ENCODE measurements at regions of chr3 and their contacts with region 1.

Region 1: GRCh38 chr3:43190666-43191065 is 84.8 kb upstream of the POMGNT2 start:
- DNase-seq: no peak
- H3K4me3 ChIP-seq: no peak overlapping the region
- H3K4me3 Mint-ChIP-seq: no peak overlapping the region
- H3K27ac ChIP-seq: no peak overlapping the region
- H3K27ac Mint-ChIP-seq: no peak overlapping the region
- H3K4me1 ChIP-seq: peaks cover 46% of the 10 kb centered on the region
- H3K4me1 Mint-ChIP-seq: peaks cover 34 to 44% (median 40%) of the 10 kb centered on the region in 4 donors
- H3K27me3 ChIP-seq: no peaks in the 10 kb centered on the region
- H3K27me3 Mint-ChIP-seq: no peaks in the 10 kb centered on the region

Region 2: DNA sequence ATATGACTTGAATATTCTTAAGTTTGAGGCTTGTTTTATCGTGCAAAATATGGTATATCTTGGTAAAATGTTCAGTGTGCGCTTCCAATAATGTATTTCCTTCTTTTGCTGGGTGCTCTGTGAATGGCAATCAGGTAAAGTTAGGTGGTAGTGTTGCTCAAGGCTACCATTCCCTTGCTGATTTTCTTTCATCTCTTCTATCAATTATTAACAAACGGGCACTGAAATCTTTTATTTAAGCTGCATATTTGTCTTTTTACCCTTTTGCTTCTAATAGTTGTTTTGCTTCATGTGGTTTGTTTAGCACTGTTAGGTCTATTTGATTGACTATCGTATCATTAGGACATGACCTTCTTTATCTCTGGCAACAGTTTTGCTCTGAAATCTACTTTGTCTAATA is 1749.1 kb before region 1 on chr3:
- CTCF ChIA-PET with region 1: no interaction called
- POLR2A ChIA-PET with region 1: no interaction called
- intact Hi-C with region 1: no loop called
- DNase-seq: no peak
- H3K4me3 ChIP-seq: no peak overlapping the region
- H3K4me3 Mint-ChIP-seq: no peak overlapping the region
- H3K27ac ChIP-seq: no peak overlapping the region
- H3K27ac Mint-ChIP-seq: no peak overlapping the region
- H3K4me1 ChIP-seq: no peaks in the 10 kb centered on the region
- H3K4me1 Mint-ChIP-seq: no peaks in the 10 kb centered on the region
- H3K27me3 ChIP-seq: no peaks in the 10 kb centered on the region
- H3K27me3 Mint-ChIP-seq: no peaks in the 10 kb centered on the region

Region 3: GRCh38 chr3:43001094-43001553 is 189.5 kb before region 1 on chr3:
- CTCF ChIA-PET with region 1: no interaction called
- POLR2A ChIA-PET with region 1: no interaction called
- intact Hi-C with region 1: no loop called
- DNase-seq: no peak
- H3K4me3 ChIP-seq: no peak overlapping the region
- H3K4me3 Mint-ChIP-seq: no peak overlapping the region
- H3K27ac ChIP-seq: no peak overlapping the region
- H3K27ac Mint-ChIP-seq: no peak overlapping the region
- H3K4me1 ChIP-seq: no peaks in the 10 kb centered on the region
- H3K4me1 Mint-ChIP-seq: peaks cover 0 to 9% (median 3%) of the 10 kb centered on the region in 4 donors
- H3K27me3 ChIP-seq: no peaks in the 10 kb centered on the region
- H3K27me3 Mint-ChIP-seq: peaks cover 0 to 2% of the 10 kb centered on the region in 2 donors

Region 4: GRCh38 chr3:43105596-43106292 is 84.9 kb before region 1 on chr3 and contains the start of gene POMGNT2:
- CTCF ChIA-PET with region 1: no interaction called
- POLR2A ChIA-PET with region 1: no interaction called
- intact Hi-C with region 1: loop called (anchors 10 kb)
- DNase-seq: peak; percentile 82 to 88 (median 87)
- H3K4me3 ChIP-seq: peak within 1 kb of the TSS; percentile 12 to 61
- H3K4me3 Mint-ChIP-seq: peak within 1 kb of the TSS; percentile 82 to 88 (median 84)
- H3K27ac ChIP-seq: peak within 1 kb of the TSS; percentile 58
- H3K27ac Mint-ChIP-seq: peak within 1 kb of the TSS; percentile 24 to 75 (median 65)
- H3K4me1 ChIP-seq: peaks cover 21% of the 10 kb centered on the region
- H3K4me1 Mint-ChIP-seq: peaks cover 11 to 22% (median 14%) of the 10 kb centered on the region in 4 donors
- H3K27me3 ChIP-seq: no peaks in the 10 kb centered on the region
- H3K27me3 Mint-ChIP-seq: peaks cover 0 to 2% of the 10 kb centered on the region in 2 donors
- total RNA-seq, gene POMGNT2: 5.4 TPM

Region 5: DNA sequence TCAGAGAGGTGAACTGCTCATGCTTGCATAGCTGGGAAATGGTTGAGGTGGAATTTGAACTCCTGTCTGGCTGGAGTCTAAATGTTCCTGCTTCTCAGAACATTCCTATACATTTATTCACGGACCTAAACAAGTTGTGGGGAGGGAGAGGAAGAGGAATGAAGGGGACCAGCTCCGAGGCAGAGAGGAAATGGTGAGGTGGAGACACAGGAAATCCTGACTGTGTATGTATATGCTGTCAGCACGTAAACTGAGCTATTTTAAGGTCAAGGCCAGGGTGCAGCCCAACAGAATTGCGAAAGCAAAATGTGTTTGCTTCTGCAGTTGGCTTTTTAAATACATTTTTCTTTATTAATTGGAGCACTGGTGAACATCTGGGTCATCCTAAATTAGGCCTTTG is 10.6 kb before region 1 on chr3:
- CTCF ChIA-PET with region 1: interaction called, 12 read pairs
- POLR2A ChIA-PET with region 1: interaction called, 50 read pairs
- intact Hi-C with region 1: loop called (anchors 1 kb)
- DNase-seq: peak; percentile 51 to 69 (median 65)
- H3K4me3 ChIP-seq: peak overlapping the region in 1 of 2 donors; percentile 20
- H3K4me3 Mint-ChIP-seq: peak overlapping the region; percentile 52 to 87 (median 78)
- H3K27ac ChIP-seq: peak overlapping the region; percentile 27
- H3K27ac Mint-ChIP-seq: peak overlapping the region; percentile 83 to 98 (median 95)
- H3K4me1 ChIP-seq: peaks cover 46% of the 10 kb centered on the region
- H3K4me1 Mint-ChIP-seq: peaks cover 40 to 72% (median 63%) of the 10 kb centered on the region in 4 donors
- H3K27me3 ChIP-seq: no peaks in the 10 kb centered on the region
- H3K27me3 Mint-ChIP-seq: no peaks in the 10 kb centered on the region